CD8-positive, alpha-beta memory T cell (primary cell): ENCODE measurements at regions of chr17 and their contacts with region 1.

Region 1: GRCh38 chr17:50026901-50027630 is 28.8 kb upstream of the ITGA3 start:
- DNase-seq: peak; percentile 61 to 81 (median 68)
- H3K4me3 ChIP-seq: no peak overlapping the region
- H3K4me3 Mint-ChIP-seq: peak overlapping the region in 3 of 7 donors; percentile 23 to 51 (median 44)
- H3K27ac ChIP-seq: no peak overlapping the region
- H3K27ac Mint-ChIP-seq: peak overlapping the region in 1 of 8 donors; percentile 50
- H3K4me1 ChIP-seq: peaks cover 8% of the 10 kb centered on the region
- H3K4me1 Mint-ChIP-seq: peaks cover 8 to 14% (median 10%) of the 10 kb centered on the region in 3 donors
- H3K27me3 ChIP-seq: peaks cover 10% of the 10 kb centered on the region
- H3K27me3 Mint-ChIP-seq: peaks cover 13 to 37% of the 10 kb centered on the region in 2 donors

Region 2: DNA sequence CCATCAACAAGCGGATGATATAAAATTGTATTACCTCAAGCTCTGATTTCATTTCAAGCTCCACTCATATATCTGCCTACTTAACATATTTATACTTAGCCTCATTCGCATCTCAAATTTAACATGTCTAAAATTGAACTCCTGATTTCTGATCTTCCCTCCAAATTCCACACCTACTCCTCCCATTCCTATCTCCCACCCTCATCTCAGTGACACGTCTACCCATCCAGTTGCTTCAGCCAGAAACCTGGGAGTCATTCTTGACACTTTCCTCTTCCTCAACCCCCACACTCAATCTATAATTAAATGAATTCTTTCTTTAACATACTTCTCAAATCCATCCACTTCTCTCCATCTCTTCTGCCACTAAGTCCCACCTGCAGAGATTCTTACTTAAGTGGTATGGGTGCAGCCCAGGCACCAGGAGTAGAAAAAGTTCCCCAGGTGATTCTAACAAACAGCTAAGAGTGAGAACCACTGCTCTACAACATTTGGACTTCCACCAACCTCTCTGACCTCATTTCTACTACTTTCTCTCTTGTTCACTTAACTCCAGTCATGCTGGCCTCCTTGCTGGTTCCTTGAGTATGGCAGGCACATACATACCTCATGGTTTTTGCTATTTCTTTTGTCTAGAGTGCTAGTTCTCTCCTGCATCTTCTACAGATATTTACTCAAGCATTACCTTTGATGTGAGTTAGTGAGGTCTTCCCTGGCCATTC is 367.2 kb before region 1 on chr17:
- CTCF ChIA-PET with region 1: no interaction called
- POLR2A ChIA-PET with region 1: no interaction called
- DNase-seq: no peak
- H3K4me3 ChIP-seq: no peak overlapping the region
- H3K4me3 Mint-ChIP-seq: peak overlapping the region in 1 of 7 donors; percentile 2
- H3K27ac ChIP-seq: no peak overlapping the region
- H3K27ac Mint-ChIP-seq: peak overlapping the region in 5 of 8 donors; percentile 24 to 85 (median 41)
- H3K4me1 ChIP-seq: peaks cover 18% of the 10 kb centered on the region
- H3K4me1 Mint-ChIP-seq: peaks cover 50 to 70% (median 68%) of the 10 kb centered on the region in 3 donors
- H3K27me3 ChIP-seq: no peaks in the 10 kb centered on the region
- H3K27me3 Mint-ChIP-seq: no peaks in the 10 kb centered on the region

Region 3: GRCh38 chr17:50076591-50077235 is 49.6 kb after region 1 on chr17:
- CTCF ChIA-PET with region 1: interaction called, 11 read pairs
- POLR2A ChIA-PET with region 1: no interaction called
- DNase-seq: no peak
- H3K4me3 ChIP-seq: no peak overlapping the region
- H3K4me3 Mint-ChIP-seq: no peak overlapping the region
- H3K27ac ChIP-seq: no peak overlapping the region
- H3K27ac Mint-ChIP-seq: peak overlapping the region in 1 of 8 donors; percentile 60
- H3K4me1 ChIP-seq: no peaks in the 10 kb centered on the region
- H3K4me1 Mint-ChIP-seq: no peaks in the 10 kb centered on the region
- H3K27me3 ChIP-seq: no peaks in the 10 kb centered on the region
- H3K27me3 Mint-ChIP-seq: peaks cover 0 to 4% of the 10 kb centered on the region in 2 donors